IMR-90 (cell line): ENCODE measurements at regions of chr18 and their contacts with region 1.

Region 1: DNA sequence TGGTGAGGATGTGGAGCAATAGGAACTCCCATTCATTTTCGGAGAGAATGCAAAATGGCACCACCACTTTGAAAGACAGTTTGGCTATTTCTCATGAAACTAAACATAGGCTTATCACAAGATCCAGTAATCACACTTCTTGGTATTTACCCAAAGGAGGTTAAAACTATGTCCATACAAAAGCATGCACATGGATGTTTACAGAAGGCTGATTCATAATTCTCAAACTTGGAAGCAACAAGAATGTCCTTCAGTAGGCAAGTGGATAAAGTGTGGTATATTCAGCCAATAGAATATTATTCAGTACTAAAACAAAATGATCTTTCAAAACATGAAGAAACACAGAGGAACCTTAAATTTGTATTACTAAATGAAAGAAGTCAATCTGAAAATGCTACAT is 440.6 kb downstream of the FBXO15 start:
- DNase-seq: peak; percentile 86
- ATAC-seq: peak; percentile 91
- H3K4me3 ChIP-seq: no peak overlapping the region
- H3K27ac ChIP-seq: no peak overlapping the region
- H3K4me1 ChIP-seq: no peaks in the 10 kb centered on the region; the same call in 1 of the 2 replicates
- H3K27me3 ChIP-seq: no peaks in the 10 kb centered on the region
- CTCF ChIP-seq: no peak
- POLR2A ChIP-seq: no peak
- RAD21 ChIP-seq: no peak

Region 2: GRCh38 chr18:73975266-73975665 is 268.2 kb after region 1 on chr18:
- CTCF ChIA-PET with region 1: no interaction called
- POLR2A ChIA-PET with region 1: no interaction called
- dilution Hi-C with region 1: no loop called
- in situ Hi-C with region 1: no loop called
- intact Hi-C with region 1: loop called (anchors 10 kb)
- DNase-seq: peak; percentile 31
- ATAC-seq: no peak
- H3K4me3 ChIP-seq: no peak overlapping the region
- H3K27ac ChIP-seq: no peak overlapping the region
- H3K4me1 ChIP-seq: peaks cover 2% of the 10 kb centered on the region; the same call in 1 of the 2 replicates
- H3K27me3 ChIP-seq: no peaks in the 10 kb centered on the region
- CTCF ChIP-seq: no peak
- POLR2A ChIP-seq: no peak
- RAD21 ChIP-seq: no peak